Psoas muscle (tissue), 8 donors: ENCODE measurements at regions of chr16 and their contacts with region 1.

Region 1: DNA sequence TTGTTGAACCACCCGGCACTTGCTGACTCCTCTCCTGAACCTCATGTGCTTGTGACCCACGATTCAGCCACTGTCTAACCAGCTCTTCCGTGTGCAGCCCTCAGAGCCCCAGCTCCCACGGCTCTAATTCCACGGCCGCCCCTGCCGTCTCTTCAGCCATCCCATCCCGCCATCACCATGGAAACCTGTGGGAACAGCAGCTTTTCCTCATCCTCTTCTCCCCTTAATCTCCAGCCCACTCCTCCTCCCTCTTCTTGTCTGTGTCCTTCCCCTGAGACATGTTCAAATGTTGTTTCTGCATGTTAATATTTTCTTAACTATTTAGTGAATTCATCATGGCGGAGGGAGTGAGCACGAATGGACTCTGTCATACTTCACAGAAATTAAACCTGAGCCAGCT is 285.2 kb downstream of the CDH13 start:
- DNase-seq: no peak
- ATAC-seq: no peak
- H3K4me3 ChIP-seq: no peak overlapping the region
- H3K27ac ChIP-seq: no peak overlapping the region
- H3K4me1 ChIP-seq: peaks cover 10% of the 10 kb centered on the region
- H3K27me3 ChIP-seq: no peaks in the 10 kb centered on the region
- CTCF ChIP-seq: no peak

Region 2: DNA sequence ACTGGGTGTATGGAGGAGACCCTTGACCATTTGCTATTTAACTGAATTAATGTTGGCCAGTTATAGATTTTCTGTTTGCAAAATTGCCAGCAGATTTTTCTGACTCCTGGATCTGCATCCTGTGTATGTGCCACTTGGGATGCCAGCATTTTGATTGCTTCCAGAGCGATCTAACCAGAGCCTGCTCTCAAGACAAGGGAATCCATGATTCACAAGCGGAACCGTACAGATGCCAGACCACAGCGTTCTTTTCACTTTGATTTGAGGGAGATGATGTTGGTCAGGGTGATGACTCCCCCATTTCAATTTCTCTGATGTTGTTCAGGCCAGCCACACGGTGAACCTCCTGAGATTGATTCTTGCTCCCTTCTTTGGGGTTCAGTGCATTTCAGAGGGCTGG is 56.5 kb before region 1 on chr16:
- intact Hi-C with region 1: loop called in 1 of 2 experiments (anchors 10 kb)
- DNase-seq: no peak
- ATAC-seq: no peak
- H3K4me3 ChIP-seq: no peak overlapping the region
- H3K27ac ChIP-seq: no peak overlapping the region
- H3K4me1 ChIP-seq: peaks cover 11% of the 10 kb centered on the region
- H3K27me3 ChIP-seq: no peaks in the 10 kb centered on the region
- CTCF ChIP-seq: no peak